Panc1 (cell line): ENCODE measurements at regions of chr2 and their contacts with region 1.

Region 1: DNA sequence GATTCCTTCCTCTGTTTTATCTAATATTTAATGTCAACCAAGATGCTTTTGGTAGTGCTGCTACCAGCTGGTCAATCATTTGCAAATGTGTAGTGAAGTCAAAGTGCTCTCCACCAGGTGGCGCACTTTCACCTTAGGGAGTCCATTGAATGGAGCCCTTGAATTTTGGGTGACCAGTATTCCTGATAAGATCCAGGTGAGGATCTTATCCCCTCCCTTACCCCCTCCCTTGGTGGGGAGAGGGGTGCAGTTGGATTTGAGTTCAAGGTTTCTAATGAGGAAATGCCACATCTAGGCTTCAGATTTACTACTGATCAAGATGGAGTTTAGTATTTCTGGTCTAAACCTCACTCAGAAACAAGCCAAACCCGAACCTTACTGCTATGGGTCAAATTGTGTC is 12.0 kb upstream of the E2F6 start:
- DNase-seq: peak; percentile 52
- ATAC-seq: peak; percentile 86
- H3K4me3 ChIP-seq: no peak overlapping the region
- H3K27ac ChIP-seq: no peak overlapping the region
- H3K4me1 ChIP-seq: no peaks in the 10 kb centered on the region
- H3K27me3 ChIP-seq: peaks cover 12% of the 10 kb centered on the region
- CTCF ChIP-seq: peak; percentile 89

Region 2: GRCh38 chr2:11140492-11140891 is 337.5 kb before region 1 on chr2:
- CTCF ChIA-PET with region 1: interaction called, 12 read pairs
- POLR2A ChIA-PET with region 1: no interaction called
- in situ Hi-C with region 1: no loop called
- intact Hi-C with region 1: no loop called
- DNase-seq: no peak
- ATAC-seq: no peak
- H3K4me3 ChIP-seq: no peak overlapping the region
- H3K27ac ChIP-seq: no peak overlapping the region
- H3K4me1 ChIP-seq: no peaks in the 10 kb centered on the region
- H3K27me3 ChIP-seq: no peaks in the 10 kb centered on the region; the same call in 1 of the 2 replicates
- CTCF ChIP-seq: no peak

Region 3: DNA sequence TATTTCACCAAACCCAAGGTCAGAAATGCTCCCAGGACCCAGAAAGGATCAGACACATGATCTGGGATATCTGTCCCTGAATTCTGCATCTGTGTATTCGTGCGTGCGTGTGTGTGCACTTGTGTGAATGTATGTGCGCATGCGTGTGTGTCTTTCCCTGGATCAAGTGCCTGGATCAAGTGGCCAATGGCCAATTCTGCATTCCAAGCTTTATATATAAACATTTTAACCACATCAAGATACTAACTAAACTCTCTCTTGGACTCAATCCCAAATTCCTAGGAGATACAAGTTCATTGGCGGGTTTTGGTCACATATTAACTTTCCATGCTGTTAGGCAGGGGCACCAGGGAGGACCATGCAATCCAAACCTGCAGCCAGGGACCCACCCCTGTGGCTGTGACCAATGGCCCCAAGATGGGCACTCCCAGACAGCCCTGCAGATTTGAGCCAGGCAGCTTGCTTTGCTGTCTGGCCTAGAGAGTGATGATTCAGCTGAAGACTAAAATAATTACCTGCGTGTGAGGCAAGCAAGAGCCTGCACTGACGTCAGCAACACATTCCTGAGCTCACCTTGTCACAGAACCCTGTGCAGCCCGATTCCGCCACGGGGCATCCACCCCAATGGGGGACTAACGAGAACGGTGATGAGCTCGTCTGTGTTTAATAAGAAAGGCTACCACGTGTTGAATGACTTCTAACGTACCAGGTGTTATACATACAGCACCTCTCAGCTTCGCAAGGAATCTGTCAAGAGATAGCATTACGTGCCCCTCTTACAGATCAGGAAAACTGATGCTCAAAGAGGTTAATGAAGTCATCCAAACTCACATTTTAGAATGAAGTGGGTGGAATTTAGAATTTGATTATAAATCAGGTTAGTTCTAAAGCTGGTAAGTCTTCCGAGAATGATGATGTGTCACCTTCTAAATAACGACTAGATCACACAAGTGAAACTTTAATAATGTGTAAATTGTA is 88.2 kb before region 1 on chr2:
- CTCF ChIA-PET with region 1: no interaction called
- POLR2A ChIA-PET with region 1: no interaction called
- in situ Hi-C with region 1: no loop called
- intact Hi-C with region 1: no loop called
- DNase-seq: no peak
- ATAC-seq: no peak
- H3K4me3 ChIP-seq: no peak overlapping the region
- H3K27ac ChIP-seq: no peak overlapping the region
- H3K4me1 ChIP-seq: peaks cover 26% of the 10 kb centered on the region
- H3K27me3 ChIP-seq: no peaks in the 10 kb centered on the region
- CTCF ChIP-seq: no peak

Region 4: DNA sequence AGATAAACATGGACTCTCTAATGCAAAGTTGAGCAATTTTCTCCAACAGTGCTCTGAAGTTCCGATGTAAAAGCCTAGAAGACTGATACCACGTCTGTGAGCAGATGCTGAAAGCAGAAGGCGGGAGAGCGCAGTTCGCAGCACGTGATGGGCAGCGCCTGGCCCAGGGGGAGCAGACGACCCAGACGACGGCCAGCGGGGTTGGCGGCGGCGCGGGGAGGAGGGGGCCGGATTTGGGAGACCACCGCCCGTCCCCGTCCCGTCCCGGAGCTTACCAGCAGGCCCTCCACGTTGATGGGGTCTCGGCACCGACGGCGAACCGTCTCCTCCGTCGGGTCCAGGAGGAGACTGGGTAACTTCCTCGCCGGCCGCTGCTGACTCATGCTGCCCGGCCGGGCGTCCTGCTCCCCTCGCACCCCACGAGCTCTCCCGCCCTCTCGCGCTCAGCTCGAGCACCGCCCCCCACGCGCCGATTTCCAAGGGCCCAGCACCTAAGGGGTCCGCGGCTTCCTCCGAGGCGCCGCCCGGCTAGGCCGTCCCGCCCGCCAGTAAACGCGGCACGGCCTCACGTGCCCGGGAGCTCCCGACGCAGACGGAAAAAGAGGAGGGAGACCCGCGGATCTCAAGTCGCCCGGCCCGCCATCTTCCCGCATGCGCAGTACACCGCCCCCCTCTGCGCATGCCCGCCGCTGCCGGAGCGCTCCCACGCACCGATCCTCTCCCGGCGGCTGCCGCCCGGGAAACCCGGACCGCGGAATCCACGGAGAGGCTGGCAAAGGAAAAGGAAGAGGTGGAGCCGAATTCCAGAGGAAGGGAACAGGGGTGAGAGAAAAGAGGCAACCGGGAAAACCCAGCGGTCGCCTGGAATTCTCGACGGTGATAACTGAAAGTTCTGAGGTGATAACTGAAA is 12.2 kb before region 1 on chr2 and contains the start of gene E2F6:
- CTCF ChIA-PET with region 1: no interaction called
- POLR2A ChIA-PET with region 1: no interaction called
- in situ Hi-C with region 1: no loop called
- intact Hi-C with region 1: no loop called
- DNase-seq: peak; percentile 48
- ATAC-seq: peak; percentile 90
- H3K4me3 ChIP-seq: peak within 1 kb of the TSS; percentile 77 to 82
- H3K27ac ChIP-seq: peak within 1 kb of the TSS; percentile 91
- H3K4me1 ChIP-seq: peaks cover 12% of the 10 kb centered on the region
- H3K27me3 ChIP-seq: no peaks in the 10 kb centered on the region
- CTCF ChIP-seq: no peak
- total RNA-seq, gene E2F6: 23.9 TPM

Region 5: GRCh38 chr2:11563306-11563705 is 85.3 kb after region 1 on chr2:
- CTCF ChIA-PET with region 1: interaction called, 10 read pairs
- POLR2A ChIA-PET with region 1: no interaction called
- in situ Hi-C with region 1: no loop called
- intact Hi-C with region 1: no loop called
- DNase-seq: no peak
- ATAC-seq: no peak
- H3K4me3 ChIP-seq: no peak overlapping the region
- H3K27ac ChIP-seq: no peak overlapping the region
- H3K4me1 ChIP-seq: no peaks in the 10 kb centered on the region
- H3K27me3 ChIP-seq: no peaks in the 10 kb centered on the region
- CTCF ChIP-seq: no peak

Region 6: DNA sequence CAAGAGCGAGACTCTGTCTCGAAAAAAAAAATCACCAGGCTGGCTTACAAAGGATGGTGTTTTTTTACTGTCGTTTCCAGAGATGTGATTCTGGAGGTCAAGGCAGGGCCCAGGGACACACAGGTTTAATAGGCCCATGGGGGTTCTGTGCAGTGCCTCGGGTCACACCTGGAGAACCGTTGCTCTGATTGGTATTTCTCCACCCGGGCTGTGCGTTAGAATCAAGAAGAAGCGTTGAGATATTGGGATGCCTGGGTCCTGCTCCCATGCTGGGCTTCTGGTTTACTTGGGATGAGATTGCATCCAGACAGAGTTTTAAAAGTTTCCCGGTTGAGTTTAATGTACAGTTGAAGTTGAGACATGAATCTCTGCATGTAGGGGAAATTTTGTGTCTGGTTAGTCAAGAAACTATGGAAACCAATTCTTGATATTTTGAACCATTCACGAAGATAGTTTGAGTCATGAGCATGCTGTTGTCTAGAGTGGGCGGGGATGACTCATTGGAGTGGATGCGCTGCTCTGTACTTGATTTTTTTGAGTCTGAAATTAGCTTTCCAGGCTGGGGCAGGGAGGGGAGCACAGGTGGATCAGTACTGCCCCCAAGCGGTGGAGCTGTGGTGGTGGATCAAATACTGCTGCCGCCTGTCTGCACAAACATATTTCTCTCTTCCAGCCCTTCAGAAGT is 106.0 kb after region 1 on chr2:
- CTCF ChIA-PET with region 1: interaction called, 16 read pairs
- POLR2A ChIA-PET with region 1: no interaction called
- in situ Hi-C with region 1: no loop called
- intact Hi-C with region 1: loop called (anchors 1 kb)
- DNase-seq: peak; percentile 41
- ATAC-seq: peak; percentile 78
- H3K4me3 ChIP-seq: no peak overlapping the region
- H3K27ac ChIP-seq: no peak overlapping the region
- H3K4me1 ChIP-seq: no peaks in the 10 kb centered on the region
- H3K27me3 ChIP-seq: peaks cover 2% of the 10 kb centered on the region; the same call in 1 of the 2 replicates
- CTCF ChIP-seq: peak; percentile 94

Region 7: GRCh38 chr2:11642974-11643373 is 165.0 kb after region 1 on chr2:
- CTCF ChIA-PET with region 1: no interaction called
- POLR2A ChIA-PET with region 1: interaction called, 16 read pairs
- in situ Hi-C with region 1: no loop called
- intact Hi-C with region 1: no loop called
- DNase-seq: no peak
- ATAC-seq: no peak
- H3K4me3 ChIP-seq: no peak overlapping the region
- H3K27ac ChIP-seq: no peak overlapping the region
- H3K4me1 ChIP-seq: no peaks in the 10 kb centered on the region
- H3K27me3 ChIP-seq: peaks cover 7% of the 10 kb centered on the region
- CTCF ChIP-seq: no peak

Region 8: GRCh38 chr2:11681722-11682589 is 204.0 kb after region 1 on chr2:
- CTCF ChIA-PET with region 1: no interaction called
- POLR2A ChIA-PET with region 1: no interaction called
- in situ Hi-C with region 1: no loop called
- intact Hi-C with region 1: loop called (anchors 5 kb)
- DNase-seq: no peak
- ATAC-seq: peak; percentile 65
- H3K4me3 ChIP-seq: no peak overlapping the region
- H3K27ac ChIP-seq: no peak overlapping the region
- H3K4me1 ChIP-seq: no peaks in the 10 kb centered on the region
- H3K27me3 ChIP-seq: no peaks in the 10 kb centered on the region; the same call in 1 of the 2 replicates
- CTCF ChIP-seq: peak; percentile 96